Calu3 (cell line): ENCODE measurements at regions of chr5 and their contacts with region 1.

Region 1: GRCh38 chr5:56050551-56051255 is 55.9 kb upstream of the IL6ST start:
- DNase-seq: no peak
- H3K4me3 Mint-ChIP-seq: no peak overlapping the region
- H3K27ac Mint-ChIP-seq: peak overlapping the region; percentile 4
- H3K4me1 Mint-ChIP-seq: peaks cover 9% of the 10 kb centered on the region
- H3K27me3 Mint-ChIP-seq: no peaks in the 10 kb centered on the region
- CTCF ChIP-seq: no peak

Region 2: GRCh38 chr5:56072863-56073766 is 22.4 kb after region 1 on chr5:
- CTCF ChIA-PET with region 1: interaction called, 12 read pairs
- intact Hi-C with region 1: no loop called
- DNase-seq: no peak
- H3K4me3 Mint-ChIP-seq: no peak overlapping the region
- H3K27ac Mint-ChIP-seq: no peak overlapping the region
- H3K4me1 Mint-ChIP-seq: no peaks in the 10 kb centered on the region
- H3K27me3 Mint-ChIP-seq: no peaks in the 10 kb centered on the region
- CTCF ChIP-seq: no peak